ENCODE measurements at regions of chr4 and their contacts with region 1.

Region 1: GRCh38 chr4:81600520-81601357 is 129.0 kb upstream of the RASGEF1B start:
- DNase-seq: no peak
- ATAC-seq: no peak
- H3K4me3 ChIP-seq: no peak overlapping the region
- H3K27ac ChIP-seq: no peak overlapping the region
- H3K4me1 ChIP-seq: no peaks in the 10 kb centered on the region
- H3K27me3 ChIP-seq: no peaks in the 10 kb centered on the region; the same call in 1 of the 2 replicates
- CTCF ChIP-seq: no peak
- POLR2A ChIP-seq: no peak
- RAD21 ChIP-seq: no peak

Region 2: GRCh38 chr4:81611221-81611620 is 10.5 kb after region 1 on chr4:
- CTCF ChIA-PET with region 1: no interaction called
- POLR2A ChIA-PET with region 1: no interaction called
- dilution Hi-C with region 1: no loop called
- in situ Hi-C with region 1: no loop called
- intact Hi-C with region 1: no loop called
- DNase-seq: no peak
- ATAC-seq: no peak
- H3K4me3 ChIP-seq: no peak overlapping the region
- H3K27ac ChIP-seq: no peak overlapping the region
- H3K4me1 ChIP-seq: no peaks in the 10 kb centered on the region
- H3K27me3 ChIP-seq: no peaks in the 10 kb centered on the region
- CTCF ChIP-seq: no peak
- POLR2A ChIP-seq: no peak
- RAD21 ChIP-seq: no peak

Region 3: DNA sequence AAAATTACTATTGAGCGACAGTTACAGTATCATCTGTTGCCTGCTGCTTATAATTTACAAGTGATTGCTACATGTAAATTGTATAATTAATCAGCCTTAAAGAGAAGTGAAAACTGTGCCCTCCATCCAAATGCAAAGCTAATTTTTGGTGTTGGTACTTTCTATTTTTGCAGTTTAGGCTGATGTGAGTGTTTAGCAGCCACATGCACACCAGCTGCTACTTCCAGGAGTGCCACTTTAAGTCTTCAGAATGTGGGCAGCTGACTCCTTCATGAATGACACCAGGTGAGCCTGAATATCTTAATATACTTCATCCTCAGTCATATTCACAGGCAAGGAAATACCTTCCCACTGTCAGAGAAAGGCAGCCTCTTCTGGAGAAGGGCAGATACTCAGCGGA is 20.8 kb after region 1 on chr4:
- CTCF ChIA-PET with region 1: interaction called, 10 read pairs
- POLR2A ChIA-PET with region 1: no interaction called
- dilution Hi-C with region 1: no loop called
- in situ Hi-C with region 1: no loop called
- intact Hi-C with region 1: no loop called
- DNase-seq: no peak
- ATAC-seq: no peak
- H3K4me3 ChIP-seq: no peak overlapping the region
- H3K27ac ChIP-seq: no peak overlapping the region
- H3K4me1 ChIP-seq: no peaks in the 10 kb centered on the region
- H3K27me3 ChIP-seq: no peaks in the 10 kb centered on the region
- CTCF ChIP-seq: no peak
- POLR2A ChIP-seq: no peak
- RAD21 ChIP-seq: no peak

Region 4: DNA sequence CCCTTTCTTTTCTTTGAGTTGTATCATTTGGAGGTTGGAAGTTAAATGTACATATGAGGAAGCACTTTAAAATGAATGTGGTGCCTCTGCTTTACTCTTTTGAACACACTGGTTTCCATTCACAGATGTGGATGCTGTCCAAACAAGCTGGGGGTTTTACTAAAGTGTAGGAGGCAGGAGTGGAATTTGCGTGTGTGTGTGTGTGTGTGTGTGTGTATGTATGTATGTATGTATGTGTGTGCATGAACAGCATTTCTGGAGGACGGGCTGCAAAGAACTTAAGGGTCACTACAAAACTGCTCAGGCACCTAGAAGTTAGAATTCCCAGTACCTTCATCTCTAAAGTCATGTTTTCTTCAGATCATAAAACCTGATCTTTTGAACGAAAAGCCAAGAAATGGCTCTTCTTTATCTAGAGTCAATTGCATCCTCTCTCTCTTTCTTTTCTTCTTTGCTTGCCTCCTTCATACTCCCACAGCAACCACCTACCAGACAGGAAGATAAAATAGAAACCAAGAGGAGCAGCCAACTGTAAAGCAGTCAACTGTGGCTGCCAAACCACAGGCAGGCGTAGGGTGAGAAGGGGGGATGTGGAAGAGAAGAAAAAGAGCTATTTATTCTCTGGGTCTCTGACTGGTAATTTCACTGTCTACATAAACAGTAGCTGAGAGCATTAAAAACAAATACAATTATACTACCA is 48.0 kb after region 1 on chr4:
- CTCF ChIA-PET with region 1: no interaction called
- POLR2A ChIA-PET with region 1: no interaction called
- dilution Hi-C with region 1: no loop called
- in situ Hi-C with region 1: no loop called
- intact Hi-C with region 1: no loop called
- DNase-seq: no peak
- ATAC-seq: no peak
- H3K4me3 ChIP-seq: no peak overlapping the region
- H3K27ac ChIP-seq: no peak overlapping the region
- H3K4me1 ChIP-seq: no peaks in the 10 kb centered on the region
- H3K27me3 ChIP-seq: no peaks in the 10 kb centered on the region
- CTCF ChIP-seq: no peak
- POLR2A ChIP-seq: no peak
- RAD21 ChIP-seq: no peak